Naive thymus-derived CD4-positive, alpha-beta T cell (primary cell): ENCODE measurements at regions of chr4 and their contacts with region 1.

Region 1: GRCh38 chr4:53490965-53491622 is 100.2 kb downstream of the LNX1 start:
- DNase-seq: no peak
- ATAC-seq: no peak
- H3K4me3 ChIP-seq: no peak overlapping the region
- H3K4me3 Mint-ChIP-seq: no peak overlapping the region
- H3K27ac ChIP-seq: no peak overlapping the region
- H3K27ac Mint-ChIP-seq: no peak overlapping the region
- H3K4me1 ChIP-seq: no peaks in the 10 kb centered on the region
- H3K4me1 Mint-ChIP-seq: no peaks in the 10 kb centered on the region
- H3K27me3 ChIP-seq: no peaks in the 10 kb centered on the region
- H3K27me3 Mint-ChIP-seq: peaks cover 14 to 25% (median 22%) of the 10 kb centered on the region in 5 donors

Region 2: DNA sequence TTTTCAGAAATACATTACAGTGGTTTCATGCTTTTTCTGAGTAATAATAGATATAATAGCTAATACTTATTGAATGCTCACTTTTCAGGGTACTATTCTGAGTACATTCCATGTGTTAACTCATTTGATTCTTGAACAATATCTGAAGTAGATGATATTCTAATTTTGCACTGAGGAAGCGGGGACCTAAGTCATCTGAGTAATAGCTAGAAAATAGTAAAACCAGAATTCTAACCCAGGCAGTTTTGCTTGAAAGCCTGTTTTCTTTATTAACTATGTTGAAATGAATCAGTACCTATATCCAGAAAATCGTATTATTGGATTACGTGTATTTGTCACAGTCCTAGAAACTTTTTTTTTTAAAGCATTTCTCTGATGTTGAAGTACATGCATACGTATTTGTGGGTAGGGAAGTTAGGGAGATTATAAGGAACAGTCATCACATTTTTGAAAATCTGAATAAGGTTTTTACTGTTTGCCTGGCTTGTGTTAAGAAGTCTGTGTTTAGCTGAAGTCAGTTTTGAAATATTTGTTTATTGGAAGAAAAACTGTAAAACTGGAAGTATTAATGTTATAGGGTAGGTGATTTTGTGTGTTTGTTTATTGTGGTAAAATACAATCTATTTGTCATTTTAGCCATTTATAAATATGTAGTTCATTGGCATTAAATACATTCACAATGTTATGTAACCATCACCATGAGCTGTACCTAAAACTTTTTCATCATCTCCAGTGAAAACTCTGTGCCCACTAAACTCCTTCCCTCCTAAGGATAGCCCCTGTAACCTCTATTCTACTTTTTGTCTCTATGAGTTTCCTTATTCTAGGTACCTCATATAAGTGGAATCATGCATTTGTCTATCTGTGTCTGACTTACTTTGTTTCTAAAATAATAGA is 58.3 kb before region 1 on chr4:
- CTCF ChIA-PET with region 1: no interaction called
- POLR2A ChIA-PET with region 1: no interaction called
- intact Hi-C with region 1: no loop called
- DNase-seq: no peak
- ATAC-seq: no peak
- H3K4me3 ChIP-seq: no peak overlapping the region
- H3K4me3 Mint-ChIP-seq: no peak overlapping the region
- H3K27ac ChIP-seq: no peak overlapping the region
- H3K27ac Mint-ChIP-seq: peak overlapping the region in 2 of 9 donors; percentile 48 to 76
- H3K4me1 ChIP-seq: peaks cover 0 to 4% of the 10 kb centered on the region in 2 donors
- H3K4me1 Mint-ChIP-seq: peaks cover 0 to 28% (median 16%) of the 10 kb centered on the region in 7 donors
- H3K27me3 ChIP-seq: no peaks in the 10 kb centered on the region
- H3K27me3 Mint-ChIP-seq: no peaks in the 10 kb centered on the region

Region 3: DNA sequence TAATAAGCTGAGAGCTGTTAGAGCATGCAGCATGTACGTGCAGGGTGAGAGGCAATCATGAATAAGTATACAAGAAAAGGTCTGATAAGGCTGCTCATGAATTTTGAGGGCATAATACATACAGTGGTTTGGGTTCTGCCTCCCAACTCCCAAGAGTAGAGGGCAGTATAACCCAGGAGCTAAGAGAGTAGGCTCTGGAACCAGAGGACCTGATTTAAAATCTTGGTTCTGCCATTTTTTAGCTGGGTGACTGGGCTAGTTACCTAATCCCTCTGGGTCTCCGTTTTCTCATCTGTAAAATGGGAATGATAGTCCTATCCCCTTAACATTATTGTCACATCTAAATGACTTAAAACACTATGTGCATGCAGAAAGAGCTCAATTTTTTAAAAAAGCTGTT is 14.9 kb after region 1 on chr4:
- CTCF ChIA-PET with region 1: interaction called, 3 read pairs
- POLR2A ChIA-PET with region 1: no interaction called
- intact Hi-C with region 1: loop called in 1 of 2 experiments (anchors 1 kb)
- DNase-seq: no peak
- ATAC-seq: no peak
- H3K4me3 ChIP-seq: no peak overlapping the region
- H3K4me3 Mint-ChIP-seq: no peak overlapping the region
- H3K27ac ChIP-seq: no peak overlapping the region
- H3K27ac Mint-ChIP-seq: no peak overlapping the region
- H3K4me1 ChIP-seq: no peaks in the 10 kb centered on the region
- H3K4me1 Mint-ChIP-seq: no peaks in the 10 kb centered on the region
- H3K27me3 ChIP-seq: no peaks in the 10 kb centered on the region
- H3K27me3 Mint-ChIP-seq: peaks cover 0 to 15% (median 3%) of the 10 kb centered on the region in 5 donors